ENCODE measurements at regions of chr4 and their contacts with region 1.

Region 1: GRCh38 chr4:79445371-79445781 is 37.3 kb upstream of the GK2 start:
- DNase-seq: no peak
- ATAC-seq: no peak
- H3K4me3 ChIP-seq: no peak overlapping the region
- H3K27ac ChIP-seq: no peak overlapping the region
- H3K4me1 ChIP-seq: no peaks in the 10 kb centered on the region
- H3K27me3 ChIP-seq: no peaks in the 10 kb centered on the region
- CTCF ChIP-seq: no peak

Region 2: GRCh38 chr4:79381161-79381560 is 64.2 kb before region 1 on chr4:
- intact Hi-C with region 1: no loop called
- DNase-seq: no peak
- ATAC-seq: no peak
- H3K4me3 ChIP-seq: no peak overlapping the region
- H3K27ac ChIP-seq: no peak overlapping the region
- H3K4me1 ChIP-seq: no peaks in the 10 kb centered on the region
- H3K27me3 ChIP-seq: no peaks in the 10 kb centered on the region
- CTCF ChIP-seq: no peak

Region 3: DNA sequence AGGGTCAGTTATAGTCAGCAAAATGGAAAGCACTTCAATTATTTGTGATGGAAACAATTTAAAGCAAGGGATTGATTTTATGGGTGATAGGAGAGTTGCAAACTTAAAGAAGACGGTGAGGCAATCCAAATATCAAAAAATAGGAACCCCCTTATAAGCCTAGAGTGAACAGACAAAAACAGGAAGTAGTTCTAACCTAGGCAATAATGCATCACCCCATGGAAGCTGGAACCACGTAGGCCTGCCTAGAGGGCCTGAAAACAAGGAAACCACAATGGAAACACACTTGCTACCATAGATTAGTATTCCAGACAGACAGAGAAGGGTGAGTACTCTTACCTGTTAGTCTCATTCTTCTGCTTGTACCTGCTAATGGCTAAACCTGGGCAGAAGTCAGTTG is 23.9 kb before region 1 on chr4:
- intact Hi-C with region 1: loop called in 1 of 2 experiments (anchors 1 kb)
- DNase-seq: no peak
- ATAC-seq: no peak
- H3K4me3 ChIP-seq: no peak overlapping the region
- H3K27ac ChIP-seq: no peak overlapping the region
- H3K4me1 ChIP-seq: no peaks in the 10 kb centered on the region
- H3K27me3 ChIP-seq: no peaks in the 10 kb centered on the region
- CTCF ChIP-seq: no peak

Measured in psoas muscle (tissue), 8 donors.